Posterior cingulate gyrus (tissue), 11 donors: ENCODE measurements at regions of chr14 and their contacts with region 1.

Region 1: DNA sequence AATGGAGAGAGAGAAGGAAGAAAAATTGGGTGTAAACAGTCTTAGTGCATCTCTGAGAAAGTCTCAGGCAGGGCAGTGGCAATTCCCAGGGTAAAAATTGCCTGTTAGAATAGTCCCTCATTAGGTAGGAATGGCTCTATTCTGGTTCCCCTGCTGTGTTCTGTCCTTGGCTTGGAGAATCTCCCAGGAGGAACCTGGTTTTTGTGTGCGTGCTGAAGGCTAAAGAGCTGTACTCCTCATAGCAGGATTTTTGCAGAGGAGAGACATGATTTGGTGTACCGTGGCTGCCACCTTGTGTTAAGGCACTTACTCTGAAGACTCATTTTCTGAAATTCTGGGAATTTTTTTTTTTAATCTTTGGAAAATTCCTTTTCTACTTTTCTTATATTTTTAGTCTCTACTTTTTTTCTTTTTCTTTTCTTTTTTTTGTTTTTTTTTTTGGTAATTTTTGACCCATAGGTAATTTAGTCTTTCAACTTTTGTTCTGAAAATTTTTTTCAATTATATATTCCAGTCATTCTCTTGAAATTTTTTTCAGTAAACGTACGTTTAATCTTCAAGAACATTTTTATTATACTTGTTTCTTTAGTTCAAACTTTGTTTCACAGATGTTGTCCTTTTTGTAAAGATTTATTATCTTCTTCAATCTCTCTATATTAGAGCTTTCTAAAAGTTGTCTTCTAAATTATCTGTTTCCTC is 63.8 kb downstream of the FBXO33 start:
- DNase-seq: peak in 6 of 10 donors; percentile 47 to 92 (median 52)

Region 2: GRCh38 chr14:39102969-39103957 is 265.1 kb before region 1 on chr14 and contains the start of gene SEC23A:
- intact Hi-C with region 1: loop called (anchors 5 kb)
- DNase-seq: peak; percentile 69 to 96 (median 80)

Region 3: GRCh38 chr14:39417014-39417413 is 48.6 kb after region 1 on chr14:
- intact Hi-C with region 1: no loop called
- DNase-seq: no peak